Lower leg skin (tissue), 4 donors: ENCODE measurements at regions of chr4 and their contacts with region 1.

Region 1: DNA sequence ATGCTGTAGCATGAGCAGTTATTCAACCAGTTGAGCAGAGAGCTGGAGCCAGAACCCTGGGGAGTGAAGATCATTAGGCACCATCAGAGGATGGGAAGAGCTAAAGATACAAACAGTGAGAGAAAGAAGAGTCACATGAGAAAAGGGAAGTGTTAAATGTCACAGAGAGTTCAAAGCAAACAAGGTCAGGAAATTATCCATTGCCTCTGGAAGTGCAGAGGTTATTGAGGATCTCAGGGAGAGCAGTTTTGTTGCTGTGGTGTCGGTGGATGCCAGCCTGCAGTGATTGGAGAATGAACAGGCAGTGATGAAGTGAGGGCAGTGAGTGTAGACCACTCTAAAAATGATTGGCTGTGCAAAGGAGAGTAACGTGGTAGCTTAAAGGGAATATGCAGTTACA is 17.7 kb downstream of the SPARCL1 start:
- DNase-seq: no peak
- H3K4me3 ChIP-seq: no peak overlapping the region
- CTCF ChIP-seq: no peak
- POLR2A ChIP-seq: no peak

Region 2: GRCh38 chr4:85946821-85947220 is 1564.7 kb before region 1 on chr4:
- intact Hi-C with region 1: loop called (anchors 5 kb)
- DNase-seq: no peak
- H3K4me3 ChIP-seq: no peak overlapping the region
- CTCF ChIP-seq: no peak
- POLR2A ChIP-seq: no peak

Region 3: GRCh38 chr4:86261636-86262035 is 1249.9 kb before region 1 on chr4:
- intact Hi-C with region 1: no loop called
- DNase-seq: no peak
- H3K4me3 ChIP-seq: no peak overlapping the region
- CTCF ChIP-seq: no peak
- POLR2A ChIP-seq: no peak

Region 4: DNA sequence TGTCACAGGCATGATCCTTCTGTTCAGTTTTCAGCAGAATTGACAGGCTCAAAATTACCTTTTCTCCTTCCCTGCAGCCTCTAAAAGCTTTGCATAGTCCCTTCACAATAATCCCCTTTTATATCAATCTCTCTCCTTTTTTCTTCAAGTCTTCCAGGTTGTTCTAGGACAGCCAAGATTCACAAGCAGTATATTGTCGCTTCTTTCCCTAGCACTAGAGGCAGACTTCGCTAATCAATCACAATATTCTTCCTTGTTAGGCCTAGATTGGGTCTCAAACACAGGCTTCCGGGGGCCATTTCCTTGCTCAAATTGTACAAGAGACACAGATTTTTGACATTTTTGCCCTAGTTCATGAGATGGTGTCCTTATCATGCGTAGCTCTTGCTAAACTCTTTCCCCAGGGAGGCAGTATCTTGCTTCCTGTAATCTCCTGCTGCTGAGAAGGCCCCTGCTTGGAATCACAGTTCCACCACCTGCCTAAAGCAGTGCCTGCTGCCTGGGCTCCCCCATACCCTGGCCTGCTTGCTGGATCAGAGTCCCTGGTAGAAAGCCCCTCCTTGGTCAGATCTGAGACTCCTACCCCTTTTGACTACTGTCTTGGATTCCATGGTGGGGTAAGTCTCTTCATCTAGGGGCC is 195.9 kb after region 1 on chr4:
- intact Hi-C with region 1: no loop called
- DNase-seq: no peak
- H3K4me3 ChIP-seq: no peak overlapping the region
- CTCF ChIP-seq: no peak
- POLR2A ChIP-seq: no peak